Ascending aorta (tissue), 2 donors: ENCODE measurements at regions of chr7 and their contacts with region 1.

Region 1: GRCh38 chr7:90552521-90552920 is 43.6 kb upstream of the CDK14 start:
- DNase-seq: no peak
- H3K4me3 ChIP-seq: no peak overlapping the region
- H3K27ac ChIP-seq: no peak overlapping the region
- H3K4me1 ChIP-seq: no peaks in the 10 kb centered on the region
- H3K27me3 ChIP-seq: no peaks in the 10 kb centered on the region
- CTCF ChIP-seq: peak in 2 of 3 experiments; percentile 29 to 47

Region 2: GRCh38 chr7:90621125-90621746 is 68.7 kb after region 1 on chr7:
- intact Hi-C with region 1: loop called (anchors 5 kb)
- DNase-seq: no peak
- H3K4me3 ChIP-seq: no peak overlapping the region
- H3K27ac ChIP-seq: no peak overlapping the region
- H3K4me1 ChIP-seq: peaks cover 0 to 11% of the 10 kb centered on the region in 2 donors
- H3K27me3 ChIP-seq: no peaks in the 10 kb centered on the region
- CTCF ChIP-seq: no peak

Region 3: GRCh38 chr7:91034459-91035368 is 482.2 kb after region 1 on chr7:
- intact Hi-C with region 1: loop called (anchors 10 kb)
- DNase-seq: peak in 1 of 2 donors; percentile 72
- H3K4me3 ChIP-seq: no peak overlapping the region
- H3K27ac ChIP-seq: no peak overlapping the region
- H3K4me1 ChIP-seq: no peaks in the 10 kb centered on the region
- H3K27me3 ChIP-seq: no peaks in the 10 kb centered on the region
- CTCF ChIP-seq: peak; percentile 27 to 64 (median 42)